ENCODE measurements at regions of chr3 and their contacts with region 1.

Region 1: GRCh38 chr3:158672293-158673176 is at the start of gene LXN:
- DNase-seq: peak; percentile 91
- ATAC-seq: peak; percentile 98
- total RNA-seq, gene LXN: 3.9 TPM

Region 2: DNA sequence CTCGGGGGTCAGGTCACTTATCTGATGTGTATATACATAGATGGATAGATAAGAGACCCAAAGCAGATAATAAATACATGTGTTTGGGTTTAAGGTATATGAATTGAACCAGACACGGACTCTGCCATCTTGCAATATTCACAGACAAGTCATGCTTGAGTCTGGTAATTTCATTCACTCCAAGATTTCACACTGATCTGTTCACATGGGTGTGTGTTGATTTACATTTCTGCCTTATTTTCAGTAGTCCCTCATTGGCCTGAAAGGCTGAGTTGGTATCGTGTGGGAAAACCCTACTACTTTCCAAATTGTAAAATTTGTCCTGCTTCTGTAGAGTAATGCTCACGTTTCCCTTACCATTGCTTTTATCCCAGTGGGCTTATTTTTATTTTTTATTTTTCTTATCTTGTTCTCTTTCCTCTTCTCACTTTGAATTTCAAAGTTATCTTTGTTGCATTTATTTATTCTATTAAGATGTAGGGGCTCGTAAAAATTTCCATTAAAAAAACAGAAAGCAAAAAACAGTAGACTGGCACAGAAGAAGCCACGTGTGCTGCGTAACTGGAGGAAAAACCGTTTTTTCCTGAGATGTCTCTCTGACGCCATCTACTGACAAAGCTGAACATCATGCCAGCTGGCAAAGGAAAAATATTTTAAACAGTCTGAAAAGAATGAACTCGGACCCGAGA is 118.5 kb after region 1 on chr3:
- intact Hi-C with region 1: loop called (anchors 5 kb)
- DNase-seq: no peak
- ATAC-seq: peak; percentile 61